Activated CD4-positive, alpha-beta memory T cell treated with anti-CD3 and anti-CD28 coated beads, Interleukin-2, amount 10 ng/mL, durations not matched to agents 7 days and 5 days (primary cell): ENCODE measurements at regions of chr1 and their contacts with region 1.

Region 1: GRCh38 chr1:87953732-87954344 is 625.2 kb downstream of the LMO4 start:
- DNase-seq: peak; percentile 54
- H3K4me3 Mint-ChIP-seq: no peak overlapping the region
- H3K27ac Mint-ChIP-seq: no peak overlapping the region
- H3K4me1 Mint-ChIP-seq: no peaks in the 10 kb centered on the region
- H3K27me3 Mint-ChIP-seq: peaks cover 15% of the 10 kb centered on the region

Region 2: GRCh38 chr1:87292684-87293493 is 660.9 kb before region 1 on chr1:
- CTCF ChIA-PET with region 1: interaction called, 47 read pairs
- POLR2A ChIA-PET with region 1: no interaction called
- DNase-seq: peak; percentile 47
- H3K4me3 Mint-ChIP-seq: no peak overlapping the region
- H3K27ac Mint-ChIP-seq: no peak overlapping the region
- H3K4me1 Mint-ChIP-seq: no peaks in the 10 kb centered on the region
- H3K27me3 Mint-ChIP-seq: peaks cover 9% of the 10 kb centered on the region

Region 3: DNA sequence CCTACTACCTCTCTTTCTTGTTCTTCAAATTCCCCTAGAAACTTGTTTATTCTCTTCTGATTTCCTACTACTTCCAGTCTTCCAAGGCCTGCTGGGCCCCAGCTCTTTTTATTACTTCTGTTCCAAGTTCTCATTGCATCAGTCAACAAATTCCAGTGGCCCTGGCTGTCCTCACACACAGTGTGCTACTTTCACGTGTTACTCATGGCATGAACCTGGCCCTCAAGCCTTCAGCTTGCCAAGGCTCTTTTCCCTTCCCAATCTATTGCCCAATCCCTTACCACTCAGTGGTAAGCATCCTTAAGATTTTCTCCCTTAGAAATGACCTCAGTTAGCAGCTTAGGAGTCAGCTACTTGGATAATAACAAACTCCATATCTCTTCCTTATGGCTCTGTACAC is 11.7 kb before region 1 on chr1:
- CTCF ChIA-PET with region 1: interaction called, 10 read pairs
- POLR2A ChIA-PET with region 1: no interaction called
- DNase-seq: no peak
- H3K4me3 Mint-ChIP-seq: no peak overlapping the region
- H3K27ac Mint-ChIP-seq: no peak overlapping the region
- H3K4me1 Mint-ChIP-seq: no peaks in the 10 kb centered on the region
- H3K27me3 Mint-ChIP-seq: peaks cover 3% of the 10 kb centered on the region